ENCODE measurements at regions of chr6 and their contacts with region 1.

Region 1: GRCh38 chr6:122839477-122839876 is 50.4 kb downstream of the SMPDL3A start:
- DNase-seq: peak; percentile 73
- H3K4me3 Mint-ChIP-seq: no peak overlapping the region
- H3K27ac Mint-ChIP-seq: no peak overlapping the region
- H3K4me1 Mint-ChIP-seq: peaks cover 8% of the 10 kb centered on the region
- H3K27me3 Mint-ChIP-seq: peaks cover 25% of the 10 kb centered on the region
- CTCF ChIP-seq: no peak

Region 2: DNA sequence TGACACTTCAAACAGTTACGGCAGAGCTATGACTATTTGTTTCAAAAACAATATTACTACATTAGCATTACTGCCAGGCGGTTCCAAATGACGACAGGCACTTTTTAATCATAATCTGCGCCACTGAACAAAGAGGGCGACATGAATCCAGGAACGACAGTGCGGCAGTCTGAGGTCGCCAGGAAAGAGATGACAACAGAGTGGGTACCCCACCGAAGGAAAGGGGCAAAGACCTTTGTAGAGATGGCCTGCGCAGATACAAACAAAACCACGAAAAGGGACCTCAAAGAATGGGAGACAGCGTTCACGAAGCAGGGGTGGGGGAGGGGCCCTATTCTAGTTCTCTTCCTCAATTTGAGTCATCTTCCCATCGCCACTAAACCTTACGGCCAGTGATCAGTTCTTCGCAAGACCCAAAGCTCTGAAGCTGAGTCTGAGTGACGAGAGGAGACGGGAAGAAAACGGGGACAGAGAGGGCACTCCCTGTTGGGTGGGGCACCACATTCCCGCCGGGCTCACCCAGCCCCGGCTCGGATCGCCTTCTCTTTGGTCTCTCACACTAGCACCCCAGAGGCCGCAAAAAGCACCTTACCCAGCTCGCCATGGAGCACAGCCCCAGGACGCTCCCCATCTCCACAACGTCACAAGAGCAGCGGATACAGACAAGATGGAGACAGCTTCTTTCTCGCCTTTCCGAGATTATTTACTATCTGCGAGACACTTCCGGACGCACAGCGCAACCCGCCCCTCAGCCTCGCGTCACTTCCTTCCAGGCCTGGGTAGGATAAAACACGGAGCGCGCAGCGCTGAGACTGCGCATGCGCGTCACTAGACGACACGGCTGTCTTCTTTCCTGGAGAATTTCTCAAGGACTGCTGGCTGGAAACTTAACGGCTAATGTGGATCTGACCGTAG is 368.1 kb before region 1 on chr6 and contains the start of gene SERINC1:
- CTCF ChIA-PET with region 1: no interaction called
- intact Hi-C with region 1: loop called (anchors 1 kb)
- DNase-seq: peak; percentile 88
- H3K4me3 Mint-ChIP-seq: peak within 1 kb of the TSS; percentile 94
- H3K27ac Mint-ChIP-seq: peak within 1 kb of the TSS; percentile 96
- H3K4me1 Mint-ChIP-seq: no peaks in the 10 kb centered on the region
- H3K27me3 Mint-ChIP-seq: no peaks in the 10 kb centered on the region
- CTCF ChIP-seq: no peak
- total RNA-seq, gene SERINC1: 117 and 125 TPM in 2 replicates

Region 3: GRCh38 chr6:122609856-122610689 is 229.4 kb before region 1 on chr6 and contains the start of gene PKIB:
- CTCF ChIA-PET with region 1: interaction called, 8 read pairs
- intact Hi-C with region 1: loop called (anchors 5 kb)
- DNase-seq: peak; percentile 87
- H3K4me3 Mint-ChIP-seq: peak within 1 kb of the TSS; percentile 88
- H3K27ac Mint-ChIP-seq: peak within 1 kb of the TSS; percentile 39
- H3K4me1 Mint-ChIP-seq: no peaks in the 10 kb centered on the region
- H3K27me3 Mint-ChIP-seq: no peaks in the 10 kb centered on the region
- CTCF ChIP-seq: peak; percentile 21
- total RNA-seq, gene PKIB: 11.8 and 17.2 TPM in 2 replicates

Region 4: DNA sequence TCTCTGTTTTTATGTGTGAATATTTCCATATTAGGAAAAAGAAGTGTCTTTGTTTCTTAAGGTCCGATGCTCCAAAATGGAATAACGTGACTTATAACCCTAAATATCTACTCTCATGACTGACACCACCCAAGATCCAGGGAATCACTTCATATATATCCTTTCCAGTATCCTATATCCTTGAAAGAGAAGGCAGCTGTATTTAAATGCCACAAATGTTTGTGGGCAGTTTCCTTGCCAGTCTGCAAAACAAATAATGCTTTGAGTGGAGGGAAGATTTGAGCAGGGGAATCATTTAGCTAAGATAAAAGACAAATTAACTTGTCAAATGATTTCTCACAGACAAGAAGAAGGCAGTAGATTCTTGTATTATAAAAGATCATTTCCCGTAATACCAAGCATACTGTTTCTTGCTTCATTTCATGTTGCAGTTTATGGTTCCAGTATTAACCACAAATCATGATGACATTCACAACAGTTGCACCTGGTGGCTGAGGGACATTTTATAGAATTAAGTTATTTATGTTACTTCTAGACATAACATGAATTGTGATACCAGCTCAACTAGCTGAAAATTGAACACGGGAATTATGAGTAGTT is 89.9 kb before region 1 on chr6:
- CTCF ChIA-PET with region 1: interaction called, 25 read pairs
- intact Hi-C with region 1: no loop called
- DNase-seq: no peak
- H3K4me3 Mint-ChIP-seq: no peak overlapping the region
- H3K27ac Mint-ChIP-seq: no peak overlapping the region
- H3K4me1 Mint-ChIP-seq: peaks cover 14% of the 10 kb centered on the region
- H3K27me3 Mint-ChIP-seq: no peaks in the 10 kb centered on the region
- CTCF ChIP-seq: no peak

Region 5: DNA sequence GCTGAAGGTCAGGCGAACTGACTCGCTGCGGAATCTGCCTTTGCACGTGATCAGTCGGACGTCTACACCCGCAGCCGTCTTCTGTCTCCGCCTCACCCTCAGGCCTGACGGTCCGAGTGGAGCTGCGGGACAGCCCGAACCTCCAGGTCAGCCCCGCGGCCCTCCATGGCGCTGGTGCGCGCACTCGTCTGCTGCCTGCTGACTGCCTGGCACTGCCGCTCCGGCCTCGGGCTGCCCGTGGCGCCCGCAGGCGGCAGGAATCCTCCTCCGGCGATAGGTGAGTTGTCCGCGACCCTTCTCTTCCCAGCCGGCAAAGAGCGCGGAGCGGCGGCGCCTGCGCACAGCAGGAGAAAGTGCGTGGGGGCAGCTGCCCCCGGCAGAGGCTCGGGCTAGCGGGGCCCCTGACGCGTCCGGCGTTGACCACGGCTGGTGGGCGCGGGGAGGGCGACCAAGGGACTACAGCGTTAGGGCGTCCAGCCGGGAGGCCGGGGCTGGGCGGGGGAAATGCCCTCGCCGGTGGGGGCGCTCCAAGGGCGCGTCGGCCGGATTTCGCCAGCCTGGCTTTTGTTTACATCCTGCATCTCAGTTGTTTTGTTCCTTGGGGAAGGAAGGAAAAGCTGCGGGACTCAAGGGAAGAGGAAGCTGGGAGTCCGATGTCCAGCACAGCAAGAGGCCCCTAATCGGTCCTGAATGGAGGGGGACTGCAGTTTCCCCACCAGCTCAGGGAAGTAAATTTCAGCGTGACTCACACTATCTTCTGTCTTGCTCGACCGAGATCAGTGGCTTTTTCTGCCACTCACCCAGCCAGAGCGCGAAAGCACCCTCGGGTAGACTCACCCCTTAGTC is 50.1 kb before region 1 on chr6 and contains the start of gene SMPDL3A:
- CTCF ChIA-PET with region 1: interaction called, 11 read pairs
- intact Hi-C with region 1: loop called (anchors 1 kb)
- DNase-seq: peak; percentile 80
- H3K4me3 Mint-ChIP-seq: peak within 1 kb of the TSS; percentile 93
- H3K27ac Mint-ChIP-seq: peak within 1 kb of the TSS; percentile 73
- H3K4me1 Mint-ChIP-seq: peaks cover 11% of the 10 kb centered on the region
- H3K27me3 Mint-ChIP-seq: no peaks in the 10 kb centered on the region
- CTCF ChIP-seq: peak; percentile 49
- total RNA-seq, gene SMPDL3A: 1.6 and 1.8 TPM in 2 replicates

Measured in Calu3 (cell line).